HepG2 (cell line): ENCODE measurements at regions of chrX and their contacts with region 1.

Region 1: GRCh38 chrX:39519030-39519488 is 578.7 kb downstream of the BCOR start:
- DNase-seq: no peak
- ATAC-seq: no peak
- H3K4me3 ChIP-seq: no peak overlapping the region
- H3K27ac ChIP-seq: no peak overlapping the region
- H3K4me1 ChIP-seq: no peaks in the 10 kb centered on the region
- H3K27me3 ChIP-seq: no peaks in the 10 kb centered on the region
- CTCF ChIP-seq: no peak
- EP300 ChIP-seq: no peak
- POLR2A ChIP-seq: no peak
- RAD21 ChIP-seq: no peak

Region 2: GRCh38 chrX:39453889-39454621 is 65.0 kb before region 1 on chrX:
- CTCF ChIA-PET with region 1: no interaction called
- POLR2A ChIA-PET with region 1: no interaction called
- in situ Hi-C with region 1: loop called (anchors 10 kb)
- intact Hi-C with region 1: no loop called
- DNase-seq: no peak
- ATAC-seq: no peak
- H3K4me3 ChIP-seq: no peak overlapping the region
- H3K27ac ChIP-seq: no peak overlapping the region
- H3K4me1 ChIP-seq: no peaks in the 10 kb centered on the region
- H3K27me3 ChIP-seq: no peaks in the 10 kb centered on the region
- CTCF ChIP-seq: no peak
- EP300 ChIP-seq: no peak
- POLR2A ChIP-seq: no peak
- RAD21 ChIP-seq: no peak